ENCODE measurements at regions of chr10 and their contacts with region 1.

Region 1: DNA sequence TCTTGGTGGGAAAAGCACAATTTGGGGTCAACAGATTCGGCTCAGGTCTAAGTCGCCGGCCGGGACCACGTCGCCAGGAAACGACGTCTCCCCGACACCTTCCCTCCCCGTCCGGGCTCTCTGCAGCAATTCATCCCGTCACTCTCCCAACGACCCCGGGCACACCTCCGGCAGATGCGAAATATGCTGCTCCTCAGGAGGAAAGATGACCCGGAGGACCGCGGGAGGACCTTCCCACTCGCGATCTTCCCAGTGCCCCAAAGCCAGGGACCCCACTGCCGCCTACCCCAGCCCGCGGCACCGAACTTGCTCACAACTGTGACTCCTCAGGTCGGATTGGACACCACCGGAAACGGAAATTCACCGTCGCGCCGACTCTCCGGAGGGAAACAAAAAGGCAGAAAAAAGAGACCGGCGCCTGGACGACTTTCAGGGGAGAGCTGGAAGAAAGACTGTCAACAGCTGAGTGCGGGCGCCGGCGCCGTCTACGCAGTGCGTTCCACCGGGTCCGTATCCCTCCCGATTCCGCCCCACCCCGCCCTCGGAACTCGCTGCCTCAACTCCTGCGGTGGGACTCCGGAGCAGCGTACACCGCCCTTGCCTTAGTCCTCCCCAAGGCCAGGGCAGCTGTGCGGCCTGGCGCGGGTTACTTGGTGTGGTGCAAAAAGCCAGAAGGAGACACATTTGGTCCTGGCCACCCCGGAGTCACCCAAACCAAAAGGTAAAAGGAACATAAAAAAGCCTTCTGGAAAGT is 13.8 kb upstream of the SEC24C start:
- DNase-seq: peak; percentile 92
- ATAC-seq: peak; percentile 92
- H3K4me3 Mint-ChIP-seq: peak overlapping the region; percentile 94
- H3K27ac Mint-ChIP-seq: peak overlapping the region; percentile 94
- H3K4me1 Mint-ChIP-seq: peaks cover 19% of the 10 kb centered on the region
- H3K27me3 Mint-ChIP-seq: no peaks in the 10 kb centered on the region
- CTCF ChIP-seq: no peak

Region 2: GRCh38 chr10:73743905-73744663 is 13.8 kb after region 1 on chr10 and contains the start of gene SEC24C:
- CTCF ChIA-PET with region 1: interaction called, 8 read pairs
- POLR2A ChIA-PET with region 1: interaction called, 23 read pairs
- intact Hi-C with region 1: no loop called
- DNase-seq: peak; percentile 97
- ATAC-seq: peak; percentile 91
- H3K4me3 Mint-ChIP-seq: peak within 1 kb of the TSS; percentile 97
- H3K27ac Mint-ChIP-seq: peak within 1 kb of the TSS; percentile 100
- H3K4me1 Mint-ChIP-seq: peaks cover 36% of the 10 kb centered on the region
- H3K27me3 Mint-ChIP-seq: no peaks in the 10 kb centered on the region
- CTCF ChIP-seq: no peak
- total RNA-seq, gene SEC24C: 87.5 to 88.7 TPM

Measured in activated CD8-positive, alpha-beta T cell treated with anti-CD3 and anti-CD28 coated beads for 36 hours (primary cell).